ENCODE measurements at regions of chr11 and their contacts with region 1.

Region 1: GRCh38 chr11:46529928-46530574 is 63.8 kb downstream of the AMBRA1 start:
- DNase-seq: no peak
- ATAC-seq: no peak

Region 2: DNA sequence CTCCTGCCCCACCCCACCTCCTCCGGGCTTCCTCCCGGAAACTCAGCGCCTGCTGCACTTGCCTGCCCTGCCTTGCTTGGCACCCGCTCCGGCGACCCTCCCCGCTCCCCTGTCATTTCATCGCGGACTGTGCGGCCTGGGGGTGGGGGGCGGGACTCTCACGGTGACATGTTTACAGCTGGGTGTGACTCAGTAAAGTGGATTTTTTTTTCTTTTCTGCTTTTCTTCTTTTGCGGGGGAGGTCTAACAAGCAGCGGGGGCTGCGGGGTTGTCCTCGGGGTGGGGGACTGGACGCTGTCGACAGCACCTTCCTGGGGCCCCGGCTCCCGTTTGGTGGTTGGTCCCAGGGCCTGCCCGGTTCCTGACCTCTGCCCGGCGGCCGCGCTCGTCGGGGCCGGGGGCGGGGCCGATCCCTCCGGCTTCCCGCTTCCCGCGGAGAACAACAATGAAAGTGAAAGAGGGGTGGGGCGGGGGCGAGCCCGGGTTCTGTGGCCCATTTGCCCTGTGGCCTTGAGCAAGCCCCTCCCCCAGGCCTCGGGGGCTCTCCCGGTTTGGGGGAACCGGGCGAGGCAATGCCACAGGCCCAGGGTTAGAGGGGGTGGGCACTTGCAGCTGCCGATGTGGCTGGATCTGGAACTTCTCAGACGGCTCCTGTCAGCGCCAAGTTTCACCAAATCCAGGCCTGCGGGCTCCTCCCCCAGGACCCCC is 149.6 kb before region 1 on chr11:
- intact Hi-C with region 1: loop called (anchors 5 kb)
- DNase-seq: peak; percentile 85
- ATAC-seq: peak; percentile 65

Measured in sciatic nerve (tissue), 2 donors.